Right ventricle myocardium inferior (tissue), 1 donor: ENCODE measurements at regions of chr1 and their contacts with region 1.

Region 1: DNA sequence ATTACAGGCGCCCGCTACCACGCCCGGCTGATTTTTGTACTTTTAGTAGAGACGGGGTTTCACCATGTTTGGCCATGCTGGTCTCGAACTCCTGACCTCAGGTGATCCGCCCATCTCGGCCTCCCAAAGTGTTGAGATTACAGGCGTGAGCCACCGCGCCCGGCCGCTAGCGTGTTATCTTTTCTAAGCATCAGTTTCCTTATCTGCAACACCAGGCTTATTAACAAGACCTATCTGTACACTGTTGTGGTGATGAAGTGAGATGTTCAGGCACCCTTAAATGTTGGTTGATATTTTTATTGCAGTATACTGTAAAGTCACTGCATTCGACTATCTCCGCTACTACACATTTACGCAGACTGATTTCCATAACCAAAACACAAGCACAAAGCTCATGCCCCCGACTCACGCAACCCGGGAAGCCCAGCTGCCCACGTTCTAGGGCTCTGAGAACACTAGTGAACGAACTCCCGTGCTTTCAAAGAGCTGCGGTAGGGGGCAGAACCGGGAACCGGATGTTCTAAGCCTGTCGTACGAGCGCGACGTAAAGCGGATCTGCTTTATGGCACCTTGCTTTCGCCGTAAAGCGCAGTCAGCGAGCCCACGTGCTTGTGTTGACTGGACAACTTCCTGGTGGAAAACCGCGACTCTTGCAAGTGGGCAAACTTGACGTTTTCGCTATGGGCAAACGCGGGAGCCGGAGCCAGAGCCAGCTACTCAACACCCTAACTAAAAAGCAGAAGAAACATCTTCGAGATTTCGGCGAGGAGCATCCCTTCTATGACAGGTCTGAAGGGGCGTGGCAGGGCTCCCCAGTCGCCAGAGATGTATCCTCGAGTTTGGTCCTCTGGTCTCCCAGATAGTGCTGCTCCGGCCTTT is at the start of gene UTP25:
- DNase-seq: peak; percentile 94
- ATAC-seq: peak; percentile 95
- total RNA-seq, gene UTP25: 2.6 TPM

Region 2: GRCh38 chr1:209389258-209389657 is 438.4 kb before region 1 on chr1:
- intact Hi-C with region 1: no loop called
- DNase-seq: no peak
- ATAC-seq: no peak

Region 3: GRCh38 chr1:209576798-209577197 is 250.8 kb before region 1 on chr1:
- intact Hi-C with region 1: loop called (anchors 10 kb)
- DNase-seq: peak; percentile 80
- ATAC-seq: peak; percentile 93

Region 4: GRCh38 chr1:209769171-209769904 is 58.3 kb before region 1 on chr1:
- intact Hi-C with region 1: loop called (anchors 10 kb)
- DNase-seq: peak; percentile 83
- ATAC-seq: peak; percentile 89

Region 5: DNA sequence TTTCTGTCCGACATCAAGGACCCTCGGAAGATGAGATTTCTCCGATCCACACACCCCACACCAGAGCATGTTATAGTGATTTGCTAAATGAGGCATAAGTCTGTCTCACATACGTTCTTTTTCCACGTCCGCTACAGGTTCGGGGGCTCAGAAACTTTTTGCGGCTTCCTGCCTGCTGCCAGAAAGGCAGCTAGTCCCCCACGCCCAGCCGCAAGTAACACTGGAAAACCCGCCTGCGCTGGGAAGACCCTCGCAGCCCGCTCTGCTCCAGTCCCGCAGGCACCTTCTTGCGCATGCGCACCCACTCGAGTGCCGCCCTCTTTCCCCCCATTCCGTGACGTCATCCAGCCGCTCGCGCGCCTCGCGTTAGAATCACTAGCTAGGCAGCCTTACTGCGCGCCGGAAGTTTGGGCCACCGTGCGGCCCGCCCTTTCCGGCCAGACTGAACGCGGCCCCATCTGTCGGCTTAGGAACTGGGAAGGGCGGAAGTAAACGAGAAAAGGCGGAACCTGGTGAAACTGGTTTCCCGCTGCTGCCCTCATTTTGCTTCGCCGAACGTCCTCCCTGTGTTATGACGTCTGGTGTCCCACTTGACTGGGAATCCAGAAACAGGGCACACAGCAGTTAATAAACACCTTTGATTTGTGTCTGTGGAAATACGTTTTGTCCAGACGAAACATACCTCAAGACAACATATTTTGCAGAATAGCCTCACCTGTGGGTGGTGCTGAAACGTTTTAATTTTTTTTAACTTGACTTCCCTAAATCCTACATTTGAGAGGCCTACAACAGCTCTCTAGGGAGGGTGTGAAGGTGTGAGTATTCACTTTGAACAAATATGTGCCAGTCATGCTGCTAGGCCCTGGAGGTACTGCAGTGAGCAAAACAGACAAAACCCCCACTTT is 43.1 kb before region 1 on chr1 and contains the start of gene C1orf74:
- intact Hi-C with region 1: loop called (anchors 2 kb)
- DNase-seq: peak; percentile 100
- ATAC-seq: peak; percentile 97
- total RNA-seq, gene C1orf74: 1.8 TPM

Region 6: DNA sequence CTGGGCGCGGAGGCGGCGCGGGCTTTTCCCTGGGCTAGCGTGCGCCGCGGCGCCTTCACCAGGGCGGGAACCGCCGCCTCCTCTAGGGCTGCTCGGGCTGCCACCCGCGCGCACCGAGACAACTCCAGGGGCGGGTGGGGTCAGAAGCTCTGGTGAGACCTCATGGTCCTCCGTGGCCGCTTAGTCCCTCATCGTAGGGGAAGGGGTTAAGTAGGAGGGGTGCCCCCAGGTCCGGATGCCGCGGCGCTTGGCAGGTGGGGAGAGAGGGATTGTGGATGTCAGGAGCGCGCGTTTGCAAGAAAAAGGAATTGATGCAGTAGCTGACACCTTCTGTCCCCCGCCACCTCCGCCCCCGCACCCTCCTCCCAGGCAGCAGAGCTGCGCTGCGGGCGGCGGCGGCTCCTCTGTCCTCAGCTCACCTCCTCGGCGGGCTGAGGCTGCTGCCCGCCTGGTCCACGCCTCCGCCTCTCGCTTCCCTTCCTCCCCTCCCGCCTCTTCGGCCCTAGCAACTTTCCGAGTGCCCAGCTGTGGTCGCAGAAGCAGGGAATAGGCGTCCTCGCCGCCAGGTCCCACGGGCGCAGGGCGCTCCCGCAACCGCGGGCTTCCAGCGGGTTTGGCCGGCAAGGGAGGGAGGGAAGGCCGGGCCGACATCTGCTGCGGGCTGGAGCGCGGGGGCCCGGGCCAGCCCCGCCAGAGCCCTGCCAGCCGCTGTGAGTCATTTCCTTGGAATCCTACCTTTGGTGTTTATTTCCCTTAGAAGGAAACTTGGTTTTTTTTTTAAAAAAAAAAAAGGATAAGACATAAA is 405.8 kb after region 1 on chr1:
- intact Hi-C with region 1: loop called (anchors 10 kb)
- DNase-seq: peak; percentile 73
- ATAC-seq: peak; percentile 23